ENCODE measurements at regions of chr10 and their contacts with region 1.

Region 1: DNA sequence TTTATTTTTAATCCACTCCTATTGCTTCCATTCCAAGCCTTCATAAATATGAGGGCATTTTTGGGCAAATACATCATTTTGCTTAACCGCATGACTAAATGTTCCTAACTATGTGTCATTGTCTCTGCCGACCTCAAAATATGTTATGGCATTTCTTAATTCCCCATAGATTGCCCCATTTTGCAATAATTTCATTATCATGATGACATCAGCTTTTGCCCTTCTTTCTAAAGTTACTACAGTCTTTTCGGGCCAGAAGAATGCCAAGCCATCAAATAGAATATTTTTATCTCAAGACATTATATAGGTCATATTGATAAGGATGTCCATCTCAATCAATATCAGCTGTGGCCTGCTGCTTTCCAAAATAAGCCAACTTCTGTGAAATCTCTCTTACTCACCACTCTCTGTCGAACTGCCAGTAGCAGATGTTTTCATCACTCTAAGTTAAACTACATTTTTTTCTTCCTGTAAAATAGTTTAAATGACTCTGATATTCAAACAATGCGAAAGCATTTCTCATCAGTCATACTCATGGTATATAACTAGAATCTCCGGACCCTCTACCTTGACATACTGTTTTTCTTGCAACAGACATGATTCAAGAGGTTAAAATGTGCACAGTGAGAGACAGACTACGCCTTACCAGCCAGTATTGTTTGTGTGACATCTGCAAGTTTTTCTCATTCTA is 1254.6 kb upstream of the CELF2 start:
- DNase-seq: no peak
- H3K4me3 ChIP-seq: no peak overlapping the region
- H3K4me3 Mint-ChIP-seq: no peak overlapping the region
- H3K27ac Mint-ChIP-seq: no peak overlapping the region
- H3K4me1 ChIP-seq: no peaks in the 10 kb centered on the region
- H3K4me1 Mint-ChIP-seq: no peaks in the 10 kb centered on the region
- H3K27me3 ChIP-seq: no peaks in the 10 kb centered on the region
- H3K27me3 Mint-ChIP-seq: no peaks in the 10 kb centered on the region
- CTCF ChIP-seq: no peak

Region 2: GRCh38 chr10:9863559-9864121 is 100.5 kb after region 1 on chr10:
- CTCF ChIA-PET with region 1: no interaction called
- POLR2A ChIA-PET with region 1: no interaction called
- intact Hi-C with region 1: loop called (anchors 1 kb)
- DNase-seq: no peak
- H3K4me3 ChIP-seq: no peak overlapping the region
- H3K4me3 Mint-ChIP-seq: no peak overlapping the region
- H3K27ac Mint-ChIP-seq: no peak overlapping the region
- H3K4me1 ChIP-seq: no peaks in the 10 kb centered on the region
- H3K4me1 Mint-ChIP-seq: no peaks in the 10 kb centered on the region
- H3K27me3 ChIP-seq: no peaks in the 10 kb centered on the region
- H3K27me3 Mint-ChIP-seq: no peaks in the 10 kb centered on the region
- CTCF ChIP-seq: no peak

Region 3: DNA sequence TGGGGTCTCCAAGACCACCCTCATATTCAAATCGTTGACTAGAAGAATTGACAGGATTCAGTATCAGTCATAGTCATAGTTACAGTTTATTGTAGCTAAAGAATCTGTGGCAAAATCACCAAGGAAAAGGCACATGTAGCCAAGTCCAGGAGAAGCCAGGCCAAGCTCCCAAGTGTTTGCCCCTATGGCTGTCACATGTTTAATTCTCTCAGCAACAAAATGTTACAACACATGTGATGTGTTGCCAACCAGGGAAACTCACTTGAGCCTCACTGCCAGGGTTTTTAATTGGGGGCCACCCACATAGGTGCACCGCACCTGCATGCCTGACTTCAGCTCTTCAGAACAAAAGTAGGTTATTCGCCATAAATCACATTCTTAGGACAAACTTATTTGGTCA is 223.7 kb after region 1 on chr10:
- CTCF ChIA-PET with region 1: no interaction called
- POLR2A ChIA-PET with region 1: no interaction called
- intact Hi-C with region 1: no loop called
- DNase-seq: no peak
- H3K4me3 ChIP-seq: no peak overlapping the region
- H3K4me3 Mint-ChIP-seq: no peak overlapping the region
- H3K27ac Mint-ChIP-seq: no peak overlapping the region
- H3K4me1 ChIP-seq: no peaks in the 10 kb centered on the region
- H3K4me1 Mint-ChIP-seq: no peaks in the 10 kb centered on the region
- H3K27me3 ChIP-seq: no peaks in the 10 kb centered on the region
- H3K27me3 Mint-ChIP-seq: no peaks in the 10 kb centered on the region
- CTCF ChIP-seq: no peak

Region 4: GRCh38 chr10:10056961-10057360 is 293.9 kb after region 1 on chr10:
- CTCF ChIA-PET with region 1: no interaction called
- POLR2A ChIA-PET with region 1: no interaction called
- intact Hi-C with region 1: loop called (anchors 1 kb)
- DNase-seq: no peak
- H3K4me3 ChIP-seq: no peak overlapping the region
- H3K4me3 Mint-ChIP-seq: no peak overlapping the region
- H3K27ac Mint-ChIP-seq: no peak overlapping the region
- H3K4me1 ChIP-seq: no peaks in the 10 kb centered on the region
- H3K4me1 Mint-ChIP-seq: no peaks in the 10 kb centered on the region
- H3K27me3 ChIP-seq: no peaks in the 10 kb centered on the region
- H3K27me3 Mint-ChIP-seq: peaks cover 5% of the 10 kb centered on the region
- CTCF ChIP-seq: no peak

Region 5: GRCh38 chr10:10149899-10150298 is 386.8 kb after region 1 on chr10:
- CTCF ChIA-PET with region 1: no interaction called
- POLR2A ChIA-PET with region 1: no interaction called
- intact Hi-C with region 1: no loop called
- DNase-seq: no peak
- H3K4me3 ChIP-seq: no peak overlapping the region
- H3K4me3 Mint-ChIP-seq: no peak overlapping the region
- H3K27ac Mint-ChIP-seq: no peak overlapping the region
- H3K4me1 ChIP-seq: no peaks in the 10 kb centered on the region
- H3K4me1 Mint-ChIP-seq: no peaks in the 10 kb centered on the region
- H3K27me3 ChIP-seq: no peaks in the 10 kb centered on the region
- H3K27me3 Mint-ChIP-seq: no peaks in the 10 kb centered on the region
- CTCF ChIP-seq: no peak

Measured in Caco-2 (cell line).